Vagina (tissue), 2 donors: ENCODE measurements at regions of chrX and their contacts with region 1.

Region 1: DNA sequence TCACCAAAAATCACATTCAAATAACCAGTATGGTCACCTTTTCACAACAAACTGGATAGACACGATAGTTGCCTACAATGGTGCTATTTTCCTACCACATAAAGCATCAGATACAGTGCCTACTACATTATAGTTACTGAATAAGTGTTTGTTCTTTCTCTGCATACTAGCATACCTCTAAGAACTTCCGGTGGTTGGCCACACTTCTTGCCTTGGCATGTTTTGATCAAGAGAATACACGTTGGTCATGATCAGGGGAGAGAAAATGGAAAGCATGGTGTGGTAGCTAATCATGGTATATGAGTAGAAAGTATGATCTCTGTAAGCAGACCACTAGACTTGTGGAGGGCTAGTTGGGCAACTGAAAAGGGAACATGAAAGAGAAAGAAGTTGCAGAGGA is 322.8 kb upstream of the DIAPH2 start:
- DNase-seq: no peak
- H3K4me3 ChIP-seq: no peak overlapping the region
- H3K27ac ChIP-seq: no peak overlapping the region
- H3K4me1 ChIP-seq: no peaks in the 10 kb centered on the region
- H3K27me3 ChIP-seq: no peaks in the 10 kb centered on the region
- CTCF ChIP-seq: no peak
- POLR2A ChIP-seq: no peak

Region 2: GRCh38 chrX:95728446-95728845 is 633.4 kb before region 1 on chrX:
- intact Hi-C with region 1: no loop called
- DNase-seq: no peak
- H3K4me3 ChIP-seq: no peak overlapping the region
- H3K27ac ChIP-seq: no peak overlapping the region
- H3K4me1 ChIP-seq: no peaks in the 10 kb centered on the region
- H3K27me3 ChIP-seq: no peaks in the 10 kb centered on the region
- CTCF ChIP-seq: no peak
- POLR2A ChIP-seq: no peak

Region 3: DNA sequence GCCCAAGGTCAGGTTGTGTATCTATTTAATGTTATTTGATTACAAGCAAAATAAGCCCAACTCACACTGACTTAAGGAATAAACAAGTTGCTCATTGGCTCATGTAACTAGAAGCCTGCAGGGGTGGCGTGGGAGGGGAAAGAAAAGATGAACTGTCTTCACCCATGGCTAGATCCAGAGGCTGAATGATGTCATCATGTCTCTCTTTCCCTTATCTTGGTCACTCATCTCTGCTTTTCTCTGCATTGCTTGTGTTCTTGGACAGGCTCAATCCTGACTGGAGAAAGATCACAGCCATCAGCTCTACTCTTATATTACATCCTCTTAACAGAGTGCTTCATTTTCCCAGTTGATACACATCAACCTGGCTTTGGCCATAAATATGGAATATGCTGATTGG is 32.8 kb after region 1 on chrX:
- intact Hi-C with region 1: no loop called
- DNase-seq: no peak
- H3K4me3 ChIP-seq: no peak overlapping the region
- H3K27ac ChIP-seq: no peak overlapping the region
- H3K4me1 ChIP-seq: peaks cover 5% of the 10 kb centered on the region
- H3K27me3 ChIP-seq: no peaks in the 10 kb centered on the region
- CTCF ChIP-seq: no peak
- POLR2A ChIP-seq: no peak

Region 4: GRCh38 chrX:96764864-96765263 is 403.0 kb after region 1 on chrX:
- intact Hi-C with region 1: loop called (anchors 10 kb)
- DNase-seq: no peak
- H3K4me3 ChIP-seq: no peak overlapping the region
- H3K27ac ChIP-seq: no peak overlapping the region
- H3K4me1 ChIP-seq: no peaks in the 10 kb centered on the region
- H3K27me3 ChIP-seq: no peaks in the 10 kb centered on the region
- CTCF ChIP-seq: no peak
- POLR2A ChIP-seq: no peak